Ascending aorta (tissue), 2 donors: ENCODE measurements at regions of chr11 and their contacts with region 1.

Region 1: GRCh38 chr11:447923-448731 is 2.0 kb upstream of the PTDSS2 start:
- DNase-seq: peak; percentile 69 to 97
- H3K4me3 ChIP-seq: peak overlapping the region; percentile 64 to 65
- H3K27ac ChIP-seq: peak overlapping the region; percentile 84 to 85
- H3K4me1 ChIP-seq: peaks cover 7 to 20% of the 10 kb centered on the region in 2 donors
- H3K27me3 ChIP-seq: no peaks in the 10 kb centered on the region
- CTCF ChIP-seq: peak; percentile 82 to 90 (median 83)

Region 2: GRCh38 chr11:236774-237767 is 211.1 kb before region 1 on chr11 and contains the start of gene PSMD13:
- intact Hi-C with region 1: loop called (anchors 1 kb)
- DNase-seq: peak; percentile 32 to 92
- H3K4me3 ChIP-seq: peak within 1 kb of the TSS; percentile 96 to 99
- H3K27ac ChIP-seq: peak within 1 kb of the TSS; percentile 98
- H3K4me1 ChIP-seq: peaks cover 8 to 15% of the 10 kb centered on the region in 2 donors
- H3K27me3 ChIP-seq: no peaks in the 10 kb centered on the region
- CTCF ChIP-seq: no peak
- total RNA-seq, gene PSMD13: 50.2 TPM

Region 3: GRCh38 chr11:406978-407739 is 41.0 kb before region 1 on chr11:
- intact Hi-C with region 1: loop called (anchors 2 kb)
- DNase-seq: peak; percentile 33 to 88
- H3K4me3 ChIP-seq: peak overlapping the region; percentile 55 to 56
- H3K27ac ChIP-seq: no peak overlapping the region
- H3K4me1 ChIP-seq: peaks cover 6 to 8% of the 10 kb centered on the region in 2 donors
- H3K27me3 ChIP-seq: no peaks in the 10 kb centered on the region
- CTCF ChIP-seq: no peak

Region 4: DNA sequence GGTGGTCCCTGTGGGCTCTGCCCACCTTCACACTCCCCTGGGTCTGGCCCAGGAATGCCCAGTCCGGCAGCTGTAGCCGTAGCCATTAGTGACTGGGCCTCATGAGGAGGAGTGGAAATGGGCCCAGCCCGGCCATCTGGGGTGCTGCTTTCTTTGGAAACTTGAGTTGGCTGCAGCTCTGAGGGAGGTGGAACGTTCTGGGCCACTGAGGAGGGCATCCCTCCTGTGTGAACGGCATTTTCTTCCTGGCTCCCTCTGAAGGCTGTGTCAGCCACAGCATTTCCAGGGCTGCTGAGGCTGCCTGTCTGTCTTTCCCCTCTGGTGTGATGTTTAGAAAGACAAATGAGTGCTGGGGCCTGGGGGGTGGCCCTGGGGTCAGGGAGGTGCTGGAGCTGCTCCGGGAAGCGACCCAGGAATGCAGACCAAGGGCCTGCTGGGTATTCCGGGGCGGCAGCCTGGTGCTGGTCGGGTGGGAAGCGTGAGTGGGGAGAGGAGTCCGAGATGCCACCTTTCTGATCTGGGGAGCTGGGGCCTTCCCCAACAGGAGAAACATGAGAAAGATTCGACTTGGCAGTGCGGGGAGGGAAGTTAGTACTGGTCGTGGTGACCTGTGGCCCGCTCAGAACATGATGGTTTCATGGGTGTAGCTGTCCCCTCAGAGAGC is 29.1 kb after region 1 on chr11:
- intact Hi-C with region 1: no loop called
- DNase-seq: no peak
- H3K4me3 ChIP-seq: no peak overlapping the region
- H3K27ac ChIP-seq: no peak overlapping the region
- H3K4me1 ChIP-seq: peaks cover 0 to 6% of the 10 kb centered on the region in 2 donors
- H3K27me3 ChIP-seq: no peaks in the 10 kb centered on the region
- CTCF ChIP-seq: no peak

Region 5: DNA sequence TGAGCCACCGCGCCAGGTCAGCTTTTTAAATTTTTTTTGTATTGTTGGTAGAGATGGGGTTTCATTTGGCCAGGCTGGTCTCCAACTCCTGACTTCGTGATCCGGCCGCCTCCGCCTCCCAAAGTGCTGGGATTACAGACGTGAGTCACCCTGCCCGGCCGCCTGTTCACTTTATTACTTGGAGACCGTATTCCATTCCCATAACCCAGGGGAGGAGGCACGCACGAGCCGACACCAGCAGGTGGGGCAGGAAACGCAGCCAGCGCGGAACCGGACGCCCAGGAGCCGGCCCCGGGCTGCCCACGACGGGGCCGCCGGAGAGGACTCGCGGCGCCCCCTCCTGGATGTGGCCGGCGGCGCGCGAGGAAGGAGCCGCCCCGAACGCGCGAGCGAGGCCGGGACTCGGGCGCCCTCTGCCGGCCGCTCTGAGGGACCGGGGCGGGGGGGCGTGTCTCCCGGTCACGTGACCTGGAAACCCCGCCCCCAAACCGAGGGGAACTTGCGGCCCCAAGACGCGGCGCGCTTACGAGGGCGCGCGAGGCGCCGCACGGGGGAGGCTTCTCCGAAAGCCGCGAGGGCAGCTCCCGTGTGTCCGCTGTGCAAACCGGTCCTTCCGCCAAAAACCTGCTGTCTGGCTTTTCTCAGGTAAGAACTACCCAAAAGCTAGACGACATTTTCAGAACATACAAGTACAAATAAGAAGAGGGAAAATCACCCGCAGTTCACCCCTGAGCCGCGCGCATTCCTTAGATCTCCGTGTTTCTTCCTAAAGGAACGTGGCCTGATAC is 70.5 kb after region 1 on chr11:
- intact Hi-C with region 1: loop called (anchors 1 kb)
- DNase-seq: peak; percentile 81 to 96
- H3K4me3 ChIP-seq: peak overlapping the region; percentile 11 to 54
- H3K27ac ChIP-seq: peak overlapping the region; percentile 76 to 80
- H3K4me1 ChIP-seq: peaks cover 2 to 3% of the 10 kb centered on the region in 2 donors
- H3K27me3 ChIP-seq: no peaks in the 10 kb centered on the region
- CTCF ChIP-seq: peak; percentile 84 to 100 (median 96)